Gastrocnemius medialis (tissue), 4 donors: ENCODE measurements at regions of chr10 and their contacts with region 1.

Region 1: GRCh38 chr10:84375011-84375410 is 46.6 kb downstream of the CCSER2 start:
- DNase-seq: no peak
- ATAC-seq: peak; percentile 50 to 55
- H3K4me3 ChIP-seq: no peak overlapping the region
- H3K27ac ChIP-seq: no peak overlapping the region
- H3K4me1 ChIP-seq: peaks cover 0 to 5% of the 10 kb centered on the region in 2 donors
- H3K27me3 ChIP-seq: no peaks in the 10 kb centered on the region
- CTCF ChIP-seq: peak; percentile 69 to 83 (median 72)
- POLR2A ChIP-seq: no peak

Region 2: DNA sequence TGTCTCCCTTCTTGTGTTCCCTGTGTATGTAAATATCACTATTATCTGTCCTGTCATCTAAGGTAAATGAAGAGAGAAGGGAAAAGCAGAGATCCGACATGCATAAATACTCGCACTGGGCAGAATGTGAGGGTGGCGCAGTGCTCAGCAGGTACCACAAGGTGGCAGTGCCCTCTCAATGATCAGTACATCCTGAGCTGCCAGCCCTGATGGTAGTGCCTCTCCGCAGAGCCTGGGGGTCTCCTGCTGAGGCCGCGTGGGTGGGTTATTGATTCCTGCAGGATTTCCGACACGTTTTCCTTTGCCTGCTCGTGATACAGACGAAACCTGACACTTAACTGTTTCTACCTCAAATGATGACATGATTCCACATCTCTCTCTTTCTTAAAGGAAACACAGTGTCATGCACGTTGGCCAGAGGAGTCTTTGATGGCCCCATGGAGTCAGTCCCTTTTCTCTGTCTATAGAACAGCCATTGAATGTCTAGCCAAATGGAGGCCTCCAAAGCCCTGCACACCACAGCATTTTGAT is 110.3 kb before region 1 on chr10:
- in situ Hi-C with region 1: loop called in 2 of 4 experiments (anchors 5 to 10 kb)
- intact Hi-C with region 1: loop called (anchors 1 kb)
- DNase-seq: peak; percentile 16 to 49
- ATAC-seq: peak; percentile 80 to 82
- H3K4me3 ChIP-seq: no peak overlapping the region
- H3K27ac ChIP-seq: no peak overlapping the region
- H3K4me1 ChIP-seq: no peaks in the 10 kb centered on the region
- H3K27me3 ChIP-seq: peaks cover 0 to 5% (median 2%) of the 10 kb centered on the region in 3 donors
- CTCF ChIP-seq: peak; percentile 78 to 92 (median 82)
- POLR2A ChIP-seq: no peak

Region 3: GRCh38 chr10:84429926-84430520 is 55.0 kb after region 1 on chr10:
- in situ Hi-C with region 1: no loop called
- intact Hi-C with region 1: loop called (anchors 5 kb)
- DNase-seq: peak in 1 of 2 donors; percentile 61
- ATAC-seq: peak in 1 of 2 donors; percentile 71
- H3K4me3 ChIP-seq: no peak overlapping the region
- H3K27ac ChIP-seq: no peak overlapping the region
- H3K4me1 ChIP-seq: peaks cover 55 to 68% of the 10 kb centered on the region in 2 donors
- H3K27me3 ChIP-seq: no peaks in the 10 kb centered on the region
- CTCF ChIP-seq: peak; percentile 33 to 74 (median 60)
- POLR2A ChIP-seq: no peak

Region 4: DNA sequence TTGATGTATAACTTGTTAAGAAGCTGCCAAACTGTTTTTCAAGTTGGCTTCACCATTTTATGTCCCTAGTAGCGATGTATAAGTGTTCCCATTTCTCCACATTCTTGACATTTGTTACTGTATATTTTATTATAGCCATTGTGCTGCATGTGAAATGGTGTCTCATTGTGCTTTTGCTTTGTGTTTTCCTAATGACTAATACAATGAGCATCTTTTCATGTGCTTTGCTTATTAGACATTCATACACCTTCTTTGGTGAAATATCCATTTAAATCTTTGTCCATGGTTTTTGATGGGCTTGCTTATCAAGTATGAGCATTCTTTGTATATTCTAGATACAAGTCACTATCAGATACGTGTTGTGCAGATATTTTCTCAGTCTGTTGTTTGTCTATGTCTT is 156.4 kb after region 1 on chr10:
- in situ Hi-C with region 1: loop called (anchors 5 kb)
- intact Hi-C with region 1: no loop called
- DNase-seq: no peak
- ATAC-seq: no peak
- H3K4me3 ChIP-seq: no peak overlapping the region
- H3K27ac ChIP-seq: no peak overlapping the region
- H3K4me1 ChIP-seq: no peaks in the 10 kb centered on the region
- H3K27me3 ChIP-seq: no peaks in the 10 kb centered on the region
- CTCF ChIP-seq: no peak
- POLR2A ChIP-seq: no peak

Region 5: DNA sequence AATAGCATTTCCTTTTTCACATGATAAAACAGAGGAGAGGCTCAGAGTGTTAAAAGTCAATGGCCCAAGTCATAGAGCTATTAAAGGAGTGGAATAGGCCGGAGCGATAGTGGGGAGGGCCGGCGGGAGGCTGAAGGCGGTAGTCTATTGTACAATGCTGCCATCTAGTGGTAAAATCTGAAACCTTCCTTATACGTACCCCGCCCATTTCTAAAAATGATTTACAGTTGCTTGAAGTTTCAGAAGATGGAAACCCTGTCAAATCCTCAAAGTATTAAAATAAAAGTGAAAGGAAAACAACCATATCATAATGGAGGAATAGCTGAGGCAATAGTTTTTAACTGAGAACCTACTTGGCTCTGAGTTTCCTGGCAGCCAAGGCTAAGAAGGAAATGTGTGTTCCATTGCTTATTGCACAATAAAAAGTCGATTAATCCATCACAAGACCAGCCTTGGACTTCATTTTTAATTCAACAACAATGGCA is 162.5 kb after region 1 on chr10:
- in situ Hi-C with region 1: loop called (anchors 5 kb)
- intact Hi-C with region 1: loop called (anchors 1 kb)
- DNase-seq: peak in 1 of 2 donors; percentile 32
- ATAC-seq: peak; percentile 72 to 89
- H3K4me3 ChIP-seq: no peak overlapping the region
- H3K27ac ChIP-seq: no peak overlapping the region
- H3K4me1 ChIP-seq: peaks cover 0 to 4% of the 10 kb centered on the region in 2 donors
- H3K27me3 ChIP-seq: peaks cover 18 to 22% (median 22%) of the 10 kb centered on the region in 3 donors
- CTCF ChIP-seq: peak; percentile 85 to 93 (median 89)
- POLR2A ChIP-seq: no peak

Region 6: GRCh38 chr10:86376852-86377796 is 2002.1 kb after region 1 on chr10:
- in situ Hi-C with region 1: no loop called
- intact Hi-C with region 1: loop called (anchors 10 kb)
- DNase-seq: peak; percentile 33 to 56
- ATAC-seq: peak; percentile 80 to 91
- H3K4me3 ChIP-seq: peak overlapping the region; percentile 17 to 55 (median 40)
- H3K27ac ChIP-seq: no peak overlapping the region
- H3K4me1 ChIP-seq: peaks cover 2 to 4% of the 10 kb centered on the region in 2 donors
- H3K27me3 ChIP-seq: peaks cover 8 to 18% (median 9%) of the 10 kb centered on the region in 3 donors
- CTCF ChIP-seq: peak; percentile 92 to 100 (median 98)
- POLR2A ChIP-seq: no peak